ENCODE measurements at regions of chr15 and their contacts with region 1.

Region 1: GRCh38 chr15:58830556-58830955 is 59.5 kb downstream of the MINDY2 start:
- DNase-seq: no peak
- ATAC-seq: no peak
- H3K4me3 ChIP-seq: no peak overlapping the region
- H3K4me3 Mint-ChIP-seq: no peak overlapping the region
- H3K27ac ChIP-seq: no peak overlapping the region
- H3K27ac Mint-ChIP-seq: no peak overlapping the region
- H3K4me1 ChIP-seq: no peaks in the 10 kb centered on the region
- H3K4me1 Mint-ChIP-seq: no peaks in the 10 kb centered on the region
- H3K27me3 ChIP-seq: no peaks in the 10 kb centered on the region
- H3K27me3 Mint-ChIP-seq: no peaks in the 10 kb centered on the region
- CTCF ChIP-seq: no peak

Region 2: GRCh38 chr15:58805095-58805494 is 25.5 kb before region 1 on chr15:
- CTCF ChIA-PET with region 1: no interaction called
- POLR2A ChIA-PET with region 1: no interaction called
- intact Hi-C with region 1: loop called in 1 of 2 experiments (anchors 1 kb)
- DNase-seq: no peak
- ATAC-seq: no peak
- H3K4me3 ChIP-seq: no peak overlapping the region
- H3K4me3 Mint-ChIP-seq: no peak overlapping the region
- H3K27ac ChIP-seq: no peak overlapping the region
- H3K27ac Mint-ChIP-seq: no peak overlapping the region
- H3K4me1 ChIP-seq: no peaks in the 10 kb centered on the region
- H3K4me1 Mint-ChIP-seq: peaks cover 7% of the 10 kb centered on the region
- H3K27me3 ChIP-seq: no peaks in the 10 kb centered on the region
- H3K27me3 Mint-ChIP-seq: no peaks in the 10 kb centered on the region
- CTCF ChIP-seq: no peak

Region 3: DNA sequence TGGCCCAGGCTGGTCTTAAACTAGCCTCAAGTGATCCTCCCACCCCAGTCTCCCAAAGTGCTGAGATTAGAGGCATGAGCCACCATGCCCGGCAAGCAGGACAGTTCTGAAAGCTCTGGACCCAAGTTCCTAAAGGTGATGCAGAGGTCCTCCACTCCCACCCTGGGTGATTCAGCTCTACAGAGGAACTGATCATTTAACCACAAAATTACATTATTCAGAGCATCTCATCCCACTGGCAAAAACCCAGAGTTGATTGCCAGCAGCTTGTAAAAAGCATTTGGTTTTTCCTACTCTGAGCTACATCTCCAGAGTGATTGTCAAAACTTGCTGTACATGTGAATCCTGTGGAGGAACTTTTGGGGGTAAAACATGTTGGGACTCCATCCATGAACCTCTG is 42.7 kb after region 1 on chr15:
- CTCF ChIA-PET with region 1: no interaction called
- POLR2A ChIA-PET with region 1: no interaction called
- intact Hi-C with region 1: no loop called
- DNase-seq: no peak
- ATAC-seq: no peak
- H3K4me3 ChIP-seq: no peak overlapping the region
- H3K4me3 Mint-ChIP-seq: no peak overlapping the region
- H3K27ac ChIP-seq: no peak overlapping the region
- H3K27ac Mint-ChIP-seq: no peak overlapping the region
- H3K4me1 ChIP-seq: no peaks in the 10 kb centered on the region
- H3K4me1 Mint-ChIP-seq: no peaks in the 10 kb centered on the region
- H3K27me3 ChIP-seq: no peaks in the 10 kb centered on the region
- H3K27me3 Mint-ChIP-seq: no peaks in the 10 kb centered on the region
- CTCF ChIP-seq: no peak

Measured in CD8-positive, alpha-beta T cell (primary cell).